ENCODE measurements at regions of chr7 and their contacts with region 1.

Region 1: DNA sequence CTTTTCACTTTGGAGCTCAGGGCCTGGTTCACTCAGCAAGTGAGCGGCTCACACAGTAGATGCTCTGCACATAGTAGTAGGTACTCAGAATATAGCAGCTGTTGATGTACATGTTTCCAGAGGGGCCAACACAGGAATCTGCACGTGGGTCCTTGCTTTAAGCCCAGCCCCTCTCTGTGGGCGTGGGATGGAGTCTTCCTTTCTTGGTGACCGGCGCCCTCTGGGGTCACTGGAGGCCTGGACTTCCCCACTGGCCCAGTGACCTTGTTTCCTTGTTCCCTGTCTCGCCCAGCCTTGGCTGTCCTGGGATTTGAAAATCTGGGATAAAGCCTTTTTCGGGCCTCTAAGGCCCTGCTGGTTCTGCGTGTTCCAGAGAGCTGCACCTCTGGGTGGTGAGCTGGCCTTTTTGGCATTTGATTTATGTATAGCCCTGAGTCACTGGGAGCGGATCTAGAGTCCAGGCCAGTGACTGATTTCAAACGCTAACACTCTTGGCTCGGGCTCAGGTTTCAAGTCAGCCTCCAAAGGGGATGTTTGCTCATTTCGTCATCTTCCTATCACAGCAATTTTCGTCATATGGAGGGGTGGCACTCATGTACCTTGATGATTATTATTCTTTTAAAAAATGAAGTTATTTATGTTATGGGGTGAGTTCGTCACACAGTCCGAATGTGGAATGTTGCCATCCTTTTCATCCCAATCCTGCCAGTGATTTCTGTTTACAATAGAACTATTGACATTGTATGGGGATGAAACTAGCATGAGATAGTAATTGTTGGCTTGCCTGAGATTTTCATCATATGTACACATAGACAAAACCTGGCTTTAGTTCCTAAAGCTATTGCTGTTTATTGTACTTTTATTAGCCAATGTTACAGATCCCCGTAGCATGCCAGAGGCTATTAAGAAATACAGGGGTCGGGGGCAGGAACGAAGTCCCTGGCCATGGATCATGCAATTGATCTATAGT is 65.5 kb downstream of the CUX1 start:
- DNase-seq: peak; percentile 88 to 98 (median 93)
- H3K4me3 ChIP-seq: no peak overlapping the region
- H3K4me3 Mint-ChIP-seq: peak overlapping the region in 1 of 2 donors; percentile 26
- H3K27ac ChIP-seq: peak overlapping the region; percentile 81 to 89
- H3K27ac Mint-ChIP-seq: peak overlapping the region; percentile 93 to 98 (median 97)
- H3K4me1 ChIP-seq: peaks cover 28 to 47% of the 10 kb centered on the region in 2 donors
- H3K4me1 Mint-ChIP-seq: peaks cover 60% of the 10 kb centered on the region
- H3K27me3 ChIP-seq: no peaks in the 10 kb centered on the region
- H3K27me3 Mint-ChIP-seq: peaks cover 0 to 2% (median 2%) of the 10 kb centered on the region in 3 donors
- CTCF ChIP-seq: no peak

Region 2: DNA sequence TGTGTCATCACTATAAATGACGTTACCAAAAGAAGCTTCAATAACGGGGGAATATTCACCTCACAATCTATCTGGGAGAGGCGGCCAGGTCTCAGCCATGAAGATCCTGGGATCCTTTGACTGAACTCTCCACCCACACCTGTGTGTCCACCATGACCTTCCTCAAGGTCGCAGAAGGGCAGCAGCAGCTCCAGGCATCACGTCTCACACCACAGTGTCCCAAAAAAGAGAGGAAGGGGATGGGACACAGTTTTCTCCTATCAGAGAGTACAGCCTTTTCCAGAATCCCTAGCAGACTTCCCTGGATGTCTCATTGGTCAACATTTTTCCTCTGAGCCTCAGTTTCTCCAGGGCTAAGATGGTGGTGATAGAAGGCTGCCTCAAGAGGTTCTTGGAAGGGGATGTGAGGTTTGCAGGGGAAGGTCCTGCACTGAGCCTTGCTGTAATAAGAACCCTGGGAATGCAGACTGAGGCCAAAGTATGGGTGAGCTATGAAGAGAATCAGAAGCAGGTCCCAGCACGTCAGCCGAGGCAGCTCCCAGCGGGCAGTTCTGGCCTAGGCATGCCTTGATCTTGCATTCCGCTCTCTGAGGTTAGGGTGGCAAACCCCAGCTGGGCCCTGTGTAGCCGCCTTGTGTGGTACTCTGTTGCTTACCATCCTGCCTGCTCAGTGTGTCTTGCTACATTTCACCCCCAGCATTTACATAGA is 456.4 kb before region 1 on chr7:
- intact Hi-C with region 1: no loop called
- DNase-seq: no peak
- H3K4me3 ChIP-seq: no peak overlapping the region
- H3K4me3 Mint-ChIP-seq: no peak overlapping the region
- H3K27ac ChIP-seq: no peak overlapping the region
- H3K27ac Mint-ChIP-seq: no peak overlapping the region
- H3K4me1 ChIP-seq: no peaks in the 10 kb centered on the region
- H3K4me1 Mint-ChIP-seq: no peaks in the 10 kb centered on the region
- H3K27me3 ChIP-seq: no peaks in the 10 kb centered on the region
- H3K27me3 Mint-ChIP-seq: peaks cover 5 to 20% (median 12%) of the 10 kb centered on the region in 3 donors
- CTCF ChIP-seq: no peak

Region 3: GRCh38 chr7:101845974-101846373 is 36.9 kb before region 1 on chr7:
- intact Hi-C with region 1: no loop called
- DNase-seq: no peak
- H3K4me3 ChIP-seq: no peak overlapping the region
- H3K4me3 Mint-ChIP-seq: no peak overlapping the region
- H3K27ac ChIP-seq: no peak overlapping the region
- H3K27ac Mint-ChIP-seq: no peak overlapping the region
- H3K4me1 ChIP-seq: peaks cover 0 to 6% of the 10 kb centered on the region in 2 donors
- H3K4me1 Mint-ChIP-seq: peaks cover 8% of the 10 kb centered on the region
- H3K27me3 ChIP-seq: no peaks in the 10 kb centered on the region
- H3K27me3 Mint-ChIP-seq: peaks cover 0 to 2% (median 1%) of the 10 kb centered on the region in 3 donors
- CTCF ChIP-seq: no peak

Region 4: DNA sequence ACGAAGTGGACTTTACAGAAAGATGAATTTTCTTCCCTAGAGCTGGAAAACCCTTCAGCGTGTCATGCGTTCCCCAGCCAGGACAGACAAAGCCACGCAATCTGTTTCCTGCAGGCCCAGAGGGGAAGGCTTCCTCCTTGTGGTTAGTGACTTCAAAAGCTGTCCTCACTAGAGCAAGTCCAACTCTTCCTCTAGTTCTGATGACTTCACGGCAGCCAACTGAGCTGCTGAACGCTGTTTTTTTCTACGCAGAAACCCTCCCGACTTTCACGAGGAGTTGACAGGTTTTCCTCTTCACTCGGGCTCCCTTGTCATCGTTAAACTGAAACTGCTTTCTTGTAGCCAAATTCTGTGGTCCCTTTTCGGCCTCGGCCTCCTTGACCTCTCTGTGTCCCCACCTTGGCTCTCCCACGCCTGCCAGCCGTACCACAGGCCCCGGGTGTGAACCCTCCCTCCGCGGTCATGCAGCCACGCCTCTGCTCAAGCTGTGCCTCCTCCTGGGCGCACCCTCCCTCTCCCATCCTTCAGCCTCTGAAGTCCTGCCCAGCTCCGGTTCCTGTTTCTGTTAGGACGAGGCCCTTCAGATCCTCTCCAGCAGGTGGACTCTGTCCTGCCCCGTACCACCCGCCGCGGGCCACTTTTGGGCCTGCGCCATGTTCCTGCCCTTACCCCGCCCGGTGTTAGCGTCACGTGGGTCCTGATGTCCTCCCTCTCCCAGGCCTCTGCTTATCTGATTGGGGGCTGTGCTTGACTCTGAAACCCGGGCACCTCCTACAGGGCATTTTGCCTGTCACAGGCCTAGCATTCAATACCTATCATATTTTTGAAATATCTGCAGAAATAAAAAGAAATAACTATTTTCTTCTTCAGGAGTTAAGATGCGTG is 26.2 kb before region 1 on chr7:
- intact Hi-C with region 1: loop called in 1 of 2 experiments (anchors 2 kb)
- DNase-seq: peak; percentile 95 to 97 (median 97)
- H3K4me3 ChIP-seq: peak overlapping the region; percentile 31 to 76 (median 48)
- H3K4me3 Mint-ChIP-seq: peak overlapping the region; percentile 80 to 85
- H3K27ac ChIP-seq: peak overlapping the region; percentile 96 to 98
- H3K27ac Mint-ChIP-seq: peak overlapping the region; percentile 99 to 100 (median 100)
- H3K4me1 ChIP-seq: peaks cover 64 to 67% of the 10 kb centered on the region in 2 donors
- H3K4me1 Mint-ChIP-seq: peaks cover 76% of the 10 kb centered on the region
- H3K27me3 ChIP-seq: no peaks in the 10 kb centered on the region
- H3K27me3 Mint-ChIP-seq: peaks cover 0 to 2% (median 1%) of the 10 kb centered on the region in 3 donors
- CTCF ChIP-seq: peak; percentile 76

Region 5: GRCh38 chr7:101990811-101991418 is 108.0 kb after region 1 on chr7:
- intact Hi-C with region 1: no loop called
- DNase-seq: peak; percentile 18 to 57 (median 55)
- H3K4me3 ChIP-seq: peak overlapping the region; percentile 24 to 59 (median 30)
- H3K4me3 Mint-ChIP-seq: peak overlapping the region; percentile 81 to 90
- H3K27ac ChIP-seq: peak overlapping the region; percentile 47 to 64
- H3K27ac Mint-ChIP-seq: peak overlapping the region; percentile 75 to 97 (median 91)
- H3K4me1 ChIP-seq: peaks cover 12 to 22% of the 10 kb centered on the region in 2 donors
- H3K4me1 Mint-ChIP-seq: peaks cover 23% of the 10 kb centered on the region
- H3K27me3 ChIP-seq: no peaks in the 10 kb centered on the region
- H3K27me3 Mint-ChIP-seq: peaks cover 0 to 2% (median 0%) of the 10 kb centered on the region in 3 donors
- CTCF ChIP-seq: no peak

Region 6: GRCh38 chr7:102165136-102165535 is 282.3 kb after region 1 on chr7:
- intact Hi-C with region 1: no loop called
- DNase-seq: no peak
- H3K4me3 ChIP-seq: no peak overlapping the region
- H3K4me3 Mint-ChIP-seq: no peak overlapping the region
- H3K27ac ChIP-seq: no peak overlapping the region
- H3K27ac Mint-ChIP-seq: peak overlapping the region in 1 of 7 donors; percentile 60
- H3K4me1 ChIP-seq: no peaks in the 10 kb centered on the region
- H3K4me1 Mint-ChIP-seq: peaks cover 2% of the 10 kb centered on the region
- H3K27me3 ChIP-seq: no peaks in the 10 kb centered on the region
- H3K27me3 Mint-ChIP-seq: peaks cover 0 to 3% (median 0%) of the 10 kb centered on the region in 3 donors
- CTCF ChIP-seq: no peak

Measured in CD14-positive monocyte (primary cell).